GM10248 (cell line): ENCODE measurements at regions of chr2 and their contacts with region 1.

Region 1: GRCh38 chr2:37549598-37549997 is 121.8 kb downstream of the CDC42EP3 start:
- DNase-seq: peak; percentile 24
- CTCF ChIP-seq: no peak

Region 2: GRCh38 chr2:37156857-37157714 is 392.5 kb before region 1 on chr2 and contains the start of gene EIF2AK2:
- CTCF ChIA-PET with region 1: no interaction called
- POLR2A ChIA-PET with region 1: no interaction called
- DNase-seq: peak; percentile 97
- CTCF ChIP-seq: no peak

Region 3: GRCh38 chr2:37537316-37537715 is 12.3 kb before region 1 on chr2:
- CTCF ChIA-PET with region 1: interaction called, 22 read pairs
- POLR2A ChIA-PET with region 1: no interaction called
- DNase-seq: no peak
- CTCF ChIP-seq: no peak

Region 4: DNA sequence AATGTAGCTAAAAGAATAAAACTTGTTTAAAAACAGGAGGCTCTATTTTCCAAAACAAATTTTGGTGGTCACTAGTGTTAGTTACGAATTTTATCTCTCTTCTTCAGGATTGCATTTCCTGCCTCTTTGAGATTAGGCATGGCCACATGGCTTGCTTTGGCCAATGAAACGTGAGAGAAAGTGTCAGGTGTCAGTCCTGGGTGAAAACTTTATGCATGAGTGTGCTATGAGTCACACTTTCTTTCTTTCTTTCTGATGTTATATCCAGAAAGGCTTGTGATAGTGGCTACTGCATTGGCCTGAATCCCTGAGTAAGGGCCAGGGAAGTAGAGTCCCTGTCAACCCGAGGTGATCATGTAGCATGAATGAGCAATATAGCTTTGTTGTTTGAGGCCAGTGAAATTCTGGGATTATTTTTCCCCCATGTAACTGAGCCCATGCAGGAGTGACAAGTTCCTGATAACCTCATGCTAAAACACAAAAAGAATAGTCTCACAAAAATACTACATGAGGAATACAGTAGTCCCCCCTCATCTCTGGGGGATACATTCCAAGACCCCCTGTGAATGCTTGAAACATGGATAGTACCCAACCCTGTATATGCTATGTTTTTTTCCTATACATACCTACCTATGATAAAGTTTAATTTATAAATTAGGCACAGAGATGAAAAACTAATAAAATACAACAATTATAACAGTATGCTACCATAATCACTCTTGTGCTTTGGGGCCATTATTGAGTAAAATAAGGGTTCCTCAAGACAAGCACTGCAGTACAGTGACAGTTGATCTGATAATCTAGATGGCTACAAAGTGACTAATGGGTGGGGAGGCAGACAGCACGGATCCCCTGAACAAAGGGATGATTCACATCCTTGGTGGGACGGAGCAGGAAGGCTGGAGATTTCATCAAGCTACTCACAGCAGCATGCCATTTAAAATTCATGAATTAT is 12.3 kb after region 1 on chr2:
- CTCF ChIA-PET with region 1: interaction called, 28 read pairs
- POLR2A ChIA-PET with region 1: no interaction called
- DNase-seq: peak; percentile 18
- CTCF ChIP-seq: no peak

Region 5: GRCh38 chr2:37570773-37571586 is 21.4 kb after region 1 on chr2:
- CTCF ChIA-PET with region 1: interaction called, 28 read pairs
- POLR2A ChIA-PET with region 1: interaction called, 4 read pairs
- DNase-seq: peak; percentile 38
- CTCF ChIP-seq: no peak